GM12878 (cell line): ENCODE measurements at regions of chr19 and their contacts with region 1.

Region 1: GRCh38 chr19:41795031-41795461 is 1.3 kb upstream of the CEACAM3 start:
- DNase-seq: peak; percentile 23
- ATAC-seq: peak; percentile 97
- H3K4me3 ChIP-seq: no peak overlapping the region
- H3K27ac ChIP-seq: no peak overlapping the region
- H3K4me1 ChIP-seq: no peaks in the 10 kb centered on the region; the same call in 1 of the 2 replicates
- H3K27me3 ChIP-seq: peaks cover 0 to 6% of the 10 kb centered on the region in 2 experiments; a peak in 2 of 4 replicates
- CTCF ChIP-seq: peak; percentile 52 to 84 (median 83)
- EP300 ChIP-seq: no peak
- POLR2A ChIP-seq: no peak
- RAD21 ChIP-seq: peak; percentile 16; the same call in 1 of the 2 replicates

Region 2: DNA sequence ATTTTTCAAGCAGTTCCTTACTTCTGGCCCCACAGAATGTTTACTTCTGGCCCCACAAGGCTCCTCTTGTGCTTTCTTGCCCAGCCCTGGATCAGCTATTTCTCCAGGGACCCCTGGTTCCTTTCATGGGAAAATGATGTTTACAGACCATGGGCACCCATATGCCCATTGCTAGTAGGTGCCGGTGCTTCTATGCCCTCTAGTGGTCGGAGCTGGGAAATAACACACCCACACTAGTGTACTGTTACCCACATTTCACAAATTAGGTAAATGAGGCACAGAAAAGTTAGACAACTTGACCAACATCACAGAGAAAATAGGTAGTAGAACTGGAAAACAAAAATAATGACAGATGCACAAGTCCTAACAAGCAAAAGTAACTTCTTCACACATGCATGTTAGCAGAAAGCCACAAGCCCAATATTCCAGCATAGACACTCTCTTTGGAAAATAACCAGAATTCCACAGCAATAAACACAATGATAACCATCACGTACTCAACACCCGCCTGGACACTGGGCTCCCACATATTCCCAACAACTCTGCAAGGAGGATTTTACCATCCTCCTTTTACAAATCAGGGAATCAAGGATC is 41.0 kb before region 1 on chr19:
- CTCF ChIA-PET with region 1: interaction called, 76 read pairs
- POLR2A ChIA-PET with region 1: no interaction called
- RAD21 ChIA-PET with region 1: interaction called, 3 read pairs
- SMC1A ChIA-PET with region 1: interaction called, 4 read pairs
- in situ Hi-C with region 1: no loop called
- intact Hi-C with region 1: no loop called
- DNase-seq: no peak
- ATAC-seq: peak; percentile 99
- H3K4me3 ChIP-seq: no peak overlapping the region
- H3K27ac ChIP-seq: no peak overlapping the region
- H3K4me1 ChIP-seq: no peaks in the 10 kb centered on the region
- H3K27me3 ChIP-seq: peaks cover 0 to 2% of the 10 kb centered on the region in 2 experiments; a peak in 2 of 4 replicates
- CTCF ChIP-seq: peak; percentile 52 to 79 (median 65)
- EP300 ChIP-seq: no peak
- POLR2A ChIP-seq: no peak
- RAD21 ChIP-seq: 0 out of 2 replicates have a peak, but pooled peaks have one; percentile 23

Region 3: DNA sequence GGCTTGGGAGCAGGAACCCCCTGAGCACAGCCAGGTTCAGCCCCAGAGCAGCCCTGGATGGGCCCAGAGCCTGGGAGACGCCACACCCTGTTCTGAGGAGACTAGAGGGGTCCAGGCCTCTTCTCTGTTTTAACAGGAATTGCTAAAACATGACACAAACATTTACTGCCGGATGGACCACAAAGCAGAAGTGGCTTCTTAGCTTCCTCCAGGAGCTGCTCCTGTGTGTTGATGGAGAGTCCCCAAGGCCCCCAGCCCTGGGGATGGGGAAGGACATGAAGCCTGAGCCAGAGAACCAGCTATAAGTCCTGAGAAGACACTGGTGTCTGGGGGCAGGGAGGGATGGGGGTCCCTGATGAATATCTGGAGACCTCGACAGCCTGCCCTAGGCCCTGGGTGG is 16.0 kb after region 1 on chr19:
- CTCF ChIA-PET with region 1: interaction called, 17 read pairs
- POLR2A ChIA-PET with region 1: no interaction called
- RAD21 ChIA-PET with region 1: no interaction called
- SMC1A ChIA-PET with region 1: interaction called, 11 read pairs
- in situ Hi-C with region 1: no loop called
- intact Hi-C with region 1: no loop called
- DNase-seq: no peak
- ATAC-seq: peak; percentile 45
- H3K4me3 ChIP-seq: no peak overlapping the region
- H3K27ac ChIP-seq: no peak overlapping the region
- H3K4me1 ChIP-seq: peaks cover 5% of the 10 kb centered on the region
- H3K27me3 ChIP-seq: no peaks in the 10 kb centered on the region; a peak in 1 of 4 replicates
- CTCF ChIP-seq: no peak
- EP300 ChIP-seq: no peak
- POLR2A ChIP-seq: no peak
- RAD21 ChIP-seq: no peak

Region 4: DNA sequence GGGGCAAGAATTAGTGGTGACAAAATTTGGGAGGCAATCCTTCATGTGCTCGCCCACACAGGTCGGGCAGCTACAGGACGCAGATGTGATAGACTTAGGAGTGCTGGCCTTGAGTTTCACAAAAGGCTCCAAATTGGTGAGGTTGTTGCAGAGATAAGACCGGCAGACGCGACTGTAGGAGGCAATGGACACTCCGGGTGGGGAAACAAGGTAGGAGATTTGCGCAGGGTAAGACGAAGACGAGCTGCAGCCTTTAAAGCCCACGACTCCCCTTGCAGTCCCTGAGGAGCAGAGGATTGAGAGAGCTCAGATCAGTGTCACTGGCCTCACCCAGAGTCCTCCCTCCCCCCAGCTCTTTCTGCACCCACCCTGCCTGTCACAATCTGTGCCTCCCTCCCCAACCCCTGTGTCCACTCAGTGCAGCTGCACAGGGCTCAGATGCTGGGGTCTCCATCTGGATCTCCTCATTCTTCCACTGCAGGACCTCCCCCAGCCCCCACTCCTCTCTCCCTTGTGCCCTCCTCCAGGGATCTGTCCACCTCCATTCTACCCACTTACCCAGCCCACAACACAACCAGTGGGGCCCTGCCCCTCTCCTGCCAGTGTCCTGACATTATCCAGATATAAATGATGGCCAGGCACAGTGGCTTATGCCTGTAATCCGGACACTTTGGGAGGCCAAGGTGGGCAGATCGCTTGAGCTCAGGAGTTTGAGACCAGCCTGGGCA is 43.1 kb after region 1 on chr19:
- CTCF ChIA-PET with region 1: interaction called, 43 read pairs
- POLR2A ChIA-PET with region 1: no interaction called
- RAD21 ChIA-PET with region 1: no interaction called
- SMC1A ChIA-PET with region 1: interaction called, 3 read pairs
- in situ Hi-C with region 1: no loop called
- intact Hi-C with region 1: no loop called
- DNase-seq: no peak
- ATAC-seq: no peak
- H3K4me3 ChIP-seq: no peak overlapping the region
- H3K27ac ChIP-seq: no peak overlapping the region
- H3K4me1 ChIP-seq: no peaks in the 10 kb centered on the region
- H3K27me3 ChIP-seq: peaks cover 2 to 4% of the 10 kb centered on the region in 2 experiments; a peak in 1 of 4 replicates
- CTCF ChIP-seq: no peak
- EP300 ChIP-seq: no peak
- POLR2A ChIP-seq: no peak
- RAD21 ChIP-seq: no peak

Region 5: DNA sequence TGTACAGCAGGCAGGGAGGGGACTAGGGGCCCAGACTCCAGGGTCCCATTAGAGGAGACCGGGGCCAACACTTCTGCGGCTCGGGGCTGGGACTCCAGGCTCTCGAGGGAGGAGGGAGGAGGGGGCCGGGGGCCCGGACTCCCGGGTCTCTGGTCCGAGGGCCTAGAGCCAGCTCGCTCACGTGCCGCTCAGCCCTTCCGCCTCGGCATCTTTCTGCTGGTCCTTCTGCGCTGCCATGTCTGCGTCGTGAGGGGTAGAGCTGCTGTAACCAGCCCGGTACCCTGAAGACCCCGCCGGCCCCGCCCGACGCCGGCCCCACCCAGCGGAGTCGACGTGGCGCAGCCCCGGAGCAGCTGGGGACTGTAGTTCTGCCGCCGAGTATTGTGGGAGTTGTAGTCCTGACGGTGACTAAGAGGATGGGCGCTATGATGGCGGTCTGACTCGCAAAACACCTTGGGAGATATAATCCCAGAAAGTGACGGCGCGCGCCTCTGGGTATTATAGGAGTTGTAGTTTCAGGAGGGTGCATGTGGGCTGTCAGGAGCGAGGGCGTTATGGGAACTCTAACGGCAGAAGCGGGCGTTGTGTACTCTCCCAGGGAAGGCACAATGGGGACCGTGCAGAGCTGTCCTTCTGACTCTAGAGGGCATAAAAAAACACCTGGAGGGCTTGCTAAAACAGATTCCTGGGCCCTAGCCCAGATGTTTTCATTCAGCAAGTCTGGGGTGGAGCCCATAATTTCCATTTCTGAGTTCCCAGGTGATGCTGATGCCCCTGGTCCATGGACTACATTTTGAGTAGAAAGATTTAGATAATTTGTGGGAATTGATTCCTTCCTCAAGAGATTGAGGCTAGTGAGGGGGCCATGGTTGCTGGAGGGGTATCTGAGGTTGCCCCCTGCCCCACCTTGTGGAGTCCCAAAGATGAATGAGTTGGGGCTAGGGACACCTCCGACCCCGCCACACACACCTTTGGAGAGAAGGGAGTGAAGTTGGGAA is 164.3 kb after region 1 on chr19 and contains the start of gene RABAC1:
- CTCF ChIA-PET with region 1: interaction called, 51 read pairs
- POLR2A ChIA-PET with region 1: no interaction called
- RAD21 ChIA-PET with region 1: interaction called, 6 read pairs
- SMC1A ChIA-PET with region 1: interaction called, 4 read pairs
- in situ Hi-C with region 1: no loop called
- intact Hi-C with region 1: loop called (anchors 5 kb)
- DNase-seq: peak; percentile 36
- ATAC-seq: peak; percentile 94
- H3K4me3 ChIP-seq: peak within 1 kb of the TSS; percentile 89
- H3K27ac ChIP-seq: peak within 1 kb of the TSS; percentile 72
- H3K4me1 ChIP-seq: peaks cover 12% of the 10 kb centered on the region
- H3K27me3 ChIP-seq: no peaks in the 10 kb centered on the region
- CTCF ChIP-seq: peak; percentile 29 to 57 (median 49); a peak in 5 of 6 replicates
- EP300 ChIP-seq: no peak
- POLR2A ChIP-seq: peak; percentile 60; the same call in 1 of the 2 replicates
- RAD21 ChIP-seq: peak; percentile 14; the same call in 1 of the 2 replicates
- polyA plus RNA-seq, gene RABAC1: 10.9 to 27.3 TPM

Region 6: DNA sequence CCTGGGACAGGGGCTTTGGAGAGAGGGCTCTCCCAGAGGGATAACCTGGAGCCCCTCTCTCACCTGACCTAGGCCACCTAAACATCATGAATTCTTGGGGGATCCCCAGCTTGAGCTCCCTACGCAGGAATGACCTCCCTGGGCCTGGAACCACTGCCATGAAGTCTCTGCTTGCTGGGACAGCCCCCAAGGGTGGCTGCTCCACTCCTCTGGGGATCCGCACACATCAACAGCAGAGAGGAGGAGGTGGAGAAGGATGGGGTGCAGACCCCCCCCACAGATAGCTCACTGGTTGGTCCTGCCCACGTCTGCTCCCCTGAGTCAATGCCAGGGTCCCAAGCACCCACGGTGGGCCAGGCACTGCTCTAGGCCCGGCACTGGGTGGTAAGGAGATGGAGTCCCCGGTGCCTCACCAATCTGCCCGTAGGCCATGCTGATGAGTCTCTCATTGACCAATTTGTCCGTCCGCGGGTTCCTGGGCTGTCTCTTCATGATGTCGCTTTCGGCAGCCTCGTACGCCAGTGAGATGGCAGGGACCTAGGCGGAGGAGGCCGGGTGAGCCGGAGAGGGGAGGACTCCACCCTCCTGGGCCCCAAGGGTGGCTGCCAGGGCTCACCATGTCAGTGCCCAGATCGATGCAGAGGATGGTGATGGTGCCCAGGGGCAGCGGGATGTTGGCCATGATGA is 174.9 kb after region 1 on chr19:
- CTCF ChIA-PET with region 1: no interaction called
- POLR2A ChIA-PET with region 1: no interaction called
- RAD21 ChIA-PET with region 1: no interaction called
- SMC1A ChIA-PET with region 1: no interaction called
- in situ Hi-C with region 1: no loop called
- intact Hi-C with region 1: no loop called
- DNase-seq: no peak
- ATAC-seq: no peak
- H3K4me3 ChIP-seq: no peak overlapping the region
- H3K27ac ChIP-seq: no peak overlapping the region
- H3K4me1 ChIP-seq: no peaks in the 10 kb centered on the region
- H3K27me3 ChIP-seq: no peaks in the 10 kb centered on the region; a peak in 3 of 4 replicates
- CTCF ChIP-seq: no peak
- EP300 ChIP-seq: no peak
- POLR2A ChIP-seq: no peak
- RAD21 ChIP-seq: no peak